Right ventricle myocardium inferior (tissue), 1 donor: ENCODE measurements at regions of chr2 and their contacts with region 1.

Region 1: DNA sequence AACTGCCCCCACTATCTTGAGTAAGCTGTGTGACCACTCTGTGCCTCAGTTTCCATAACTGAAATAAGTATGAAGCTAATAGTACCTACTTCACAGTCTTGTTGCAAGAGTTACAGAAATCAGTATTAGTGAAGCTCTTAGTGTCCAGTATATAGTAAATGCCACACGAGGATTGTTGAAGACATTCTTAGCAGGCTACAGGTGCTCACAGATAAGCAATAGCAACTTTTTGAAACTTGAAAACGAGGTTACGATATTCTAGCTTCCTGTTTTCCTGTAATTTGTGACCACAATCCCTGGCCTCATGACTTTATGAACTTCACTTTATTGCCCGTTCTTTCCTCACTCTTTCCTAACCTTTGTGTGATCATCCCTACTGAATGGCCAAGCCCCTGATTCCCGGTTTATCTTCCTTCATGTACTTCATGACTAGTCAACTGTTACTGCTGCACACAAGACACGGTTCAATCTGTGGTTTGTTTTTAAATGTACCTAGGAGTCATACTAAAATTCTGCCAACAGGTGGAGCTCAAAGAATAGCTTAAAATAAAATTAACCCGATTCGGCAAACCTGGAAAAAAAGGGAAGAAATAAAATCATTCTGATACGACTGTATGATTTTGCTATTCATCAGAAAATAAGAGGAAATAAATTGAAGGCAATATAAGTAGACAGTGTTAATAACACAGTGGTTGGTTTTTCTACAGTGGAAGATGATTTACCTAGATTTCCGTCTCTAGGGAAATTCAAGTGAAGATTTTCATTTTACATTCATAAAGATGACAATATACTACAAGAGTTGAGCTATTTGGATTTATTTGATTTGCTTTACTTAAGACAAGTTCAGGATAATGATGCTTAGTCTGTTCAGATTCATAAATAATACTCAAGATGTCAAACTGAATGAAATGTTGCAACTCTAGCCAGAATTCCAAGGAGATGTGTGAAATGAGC is 38.1 kb upstream of the STAT1 start:
- DNase-seq: no peak
- ATAC-seq: no peak

Region 2: DNA sequence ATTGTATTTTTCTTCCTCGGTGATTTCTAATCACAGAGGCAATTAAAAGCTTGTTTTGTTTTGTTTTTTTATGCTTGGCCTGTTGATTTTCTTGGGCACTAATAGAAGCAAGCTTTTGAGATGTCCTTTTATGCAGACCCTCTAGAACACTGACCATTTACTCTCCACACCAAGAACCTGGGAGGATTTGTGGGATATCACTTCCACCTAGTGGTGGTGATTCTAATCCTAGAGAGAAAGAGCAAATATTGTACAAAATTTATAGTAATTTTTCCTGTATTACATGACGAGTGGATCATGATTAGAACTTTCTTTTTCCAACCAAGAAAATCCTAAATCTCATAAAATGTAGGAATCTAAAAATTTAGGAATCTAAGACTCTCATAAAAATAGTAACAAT is 541.0 kb before region 1 on chr2:
- intact Hi-C with region 1: no loop called
- DNase-seq: no peak
- ATAC-seq: no peak

Region 3: GRCh38 chr2:191150600-191151330 is 98.7 kb after region 1 on chr2 and contains the start of gene STAT4:
- intact Hi-C with region 1: loop called (anchors 5 kb)
- DNase-seq: peak; percentile 77
- ATAC-seq: peak; percentile 43
- total RNA-seq, gene STAT4: 0.76 TPM

Region 4: GRCh38 chr2:191521608-191522208 is 469.6 kb after region 1 on chr2:
- intact Hi-C with region 1: loop called (anchors 5 kb)
- DNase-seq: no peak
- ATAC-seq: no peak